PC-9 (cell line): ENCODE measurements at regions of chr1 and their contacts with region 1.

Region 1: DNA sequence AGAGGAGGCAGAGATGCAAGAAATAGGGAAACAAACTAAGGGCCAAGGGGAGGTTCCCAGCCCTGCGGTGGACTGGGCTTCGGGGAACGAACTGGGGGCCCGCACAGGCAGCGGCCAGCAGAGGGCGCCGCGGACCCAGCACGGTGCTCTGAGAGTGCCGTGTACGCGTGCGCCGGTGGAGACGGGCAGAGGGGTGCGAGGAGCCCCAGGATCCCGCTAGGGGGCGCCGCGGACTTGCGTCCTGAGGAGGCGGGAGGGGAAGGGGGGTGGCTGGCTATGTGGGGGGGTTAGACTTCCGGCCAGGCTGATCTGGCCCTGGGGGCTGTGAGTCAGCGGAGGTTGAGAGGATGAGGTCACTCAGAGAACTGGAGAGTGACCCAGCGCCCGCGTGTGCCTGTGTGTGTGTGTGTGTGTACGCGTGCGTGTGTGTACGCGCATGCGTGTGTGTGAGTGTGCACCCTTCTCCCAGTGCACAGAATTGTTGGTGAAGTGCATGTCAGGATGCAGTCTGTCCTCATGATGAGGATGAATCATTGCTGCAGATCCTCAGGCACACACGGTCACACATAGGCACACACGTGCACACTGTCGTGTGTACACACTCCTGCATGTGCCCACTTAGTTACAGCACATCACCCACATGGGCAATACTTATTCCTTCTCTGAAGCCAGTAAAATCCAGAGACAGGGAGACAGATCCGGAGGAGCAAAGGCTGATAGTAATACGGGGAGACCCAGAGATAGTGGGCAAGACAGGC is 17.0 kb downstream of the NES start:
- DNase-seq: peak; percentile 90 to 97
- H3K4me3 ChIP-seq: peak overlapping the region; percentile 73
- H3K27ac ChIP-seq: peak overlapping the region; percentile 86
- H3K4me1 ChIP-seq: peaks cover 25% of the 10 kb centered on the region
- H3K27me3 ChIP-seq: no peaks in the 10 kb centered on the region
- CTCF ChIP-seq: peak; percentile 98

Region 2: DNA sequence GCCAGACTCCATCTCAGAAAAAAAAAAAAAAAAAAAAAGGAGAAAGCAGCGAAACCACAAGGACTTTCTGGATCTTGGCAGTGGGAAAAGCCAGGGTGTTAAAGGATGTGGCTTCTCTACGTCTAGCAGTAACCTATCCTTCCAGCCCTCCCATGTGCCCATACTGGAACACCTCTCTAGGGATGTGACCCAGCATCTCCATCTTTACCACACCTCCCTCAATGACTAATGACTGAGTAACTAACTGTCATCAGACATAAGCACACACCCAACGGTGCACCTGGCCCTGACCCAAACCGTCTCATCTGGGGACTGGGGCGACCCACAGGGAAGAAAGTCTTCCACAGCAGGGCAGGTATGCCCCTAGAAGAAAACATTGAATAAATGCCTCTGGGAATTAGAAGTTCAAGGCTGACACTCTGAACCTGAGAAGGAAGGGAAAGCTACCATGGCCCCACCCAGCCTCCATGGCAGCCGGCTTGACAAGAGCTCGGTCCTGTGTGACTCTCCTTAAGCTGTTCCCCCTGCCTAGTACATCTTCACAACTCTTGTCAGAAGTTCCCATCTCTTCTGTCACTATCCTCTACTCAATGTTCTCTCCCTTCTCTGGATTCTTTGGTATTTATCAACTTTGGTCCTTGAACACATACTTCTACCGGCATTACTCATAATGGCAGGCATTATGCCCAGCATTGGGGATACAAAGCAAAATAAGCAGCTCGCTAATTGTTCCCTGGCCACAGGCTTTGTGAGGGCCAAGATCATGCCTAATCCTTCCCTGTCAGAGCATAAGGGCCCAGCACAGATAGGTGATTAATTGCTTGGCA is 397.5 kb before region 1 on chr1:
- CTCF ChIA-PET with region 1: interaction called, 13 read pairs
- POLR2A ChIA-PET with region 1: no interaction called
- intact Hi-C with region 1: no loop called
- DNase-seq: peak; percentile 45 to 46
- H3K4me3 ChIP-seq: no peak overlapping the region
- H3K27ac ChIP-seq: no peak overlapping the region
- H3K4me1 ChIP-seq: no peaks in the 10 kb centered on the region
- H3K27me3 ChIP-seq: no peaks in the 10 kb centered on the region
- CTCF ChIP-seq: no peak

Region 3: GRCh38 chr1:156500797-156501499 is 159.2 kb before region 1 on chr1:
- CTCF ChIA-PET with region 1: no interaction called
- POLR2A ChIA-PET with region 1: no interaction called
- intact Hi-C with region 1: no loop called
- DNase-seq: peak; percentile 87 to 93
- H3K4me3 ChIP-seq: peak overlapping the region; percentile 100
- H3K27ac ChIP-seq: peak overlapping the region; percentile 97
- H3K4me1 ChIP-seq: peaks cover 55% of the 10 kb centered on the region
- H3K27me3 ChIP-seq: no peaks in the 10 kb centered on the region
- CTCF ChIP-seq: peak; percentile 74

Region 4: DNA sequence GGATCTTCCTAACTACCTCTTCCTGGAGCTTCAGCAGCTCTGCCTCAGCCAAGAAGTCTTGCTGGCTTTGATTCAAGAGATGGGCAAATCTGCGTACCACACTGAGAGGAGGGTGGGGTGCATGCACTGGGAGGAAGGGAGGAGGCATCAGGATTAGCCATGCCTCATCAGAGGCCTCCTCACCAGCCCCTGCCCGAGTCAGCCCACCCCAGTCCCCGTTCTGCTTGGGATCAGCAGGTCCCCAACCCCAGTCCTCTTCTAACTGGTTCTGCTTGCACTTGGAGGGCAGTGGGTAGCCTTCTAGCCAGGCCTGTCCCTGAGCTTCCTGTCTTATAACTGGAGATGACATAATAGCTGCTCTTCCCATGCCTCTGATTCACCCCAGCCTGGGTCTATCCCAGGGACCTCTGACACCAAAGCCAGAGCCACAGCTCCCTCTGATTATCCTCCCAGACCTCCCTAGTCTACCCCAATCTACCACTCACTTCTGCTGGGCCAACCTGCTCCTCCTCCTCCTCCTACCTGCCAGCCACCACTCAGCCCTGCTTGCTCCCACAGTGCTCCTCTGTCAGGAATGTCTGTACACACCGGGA is 119.3 kb before region 1 on chr1:
- CTCF ChIA-PET with region 1: no interaction called
- POLR2A ChIA-PET with region 1: no interaction called
- intact Hi-C with region 1: no loop called
- DNase-seq: no peak
- H3K4me3 ChIP-seq: no peak overlapping the region
- H3K27ac ChIP-seq: no peak overlapping the region
- H3K4me1 ChIP-seq: peaks cover 11% of the 10 kb centered on the region
- H3K27me3 ChIP-seq: no peaks in the 10 kb centered on the region
- CTCF ChIP-seq: no peak

Region 5: DNA sequence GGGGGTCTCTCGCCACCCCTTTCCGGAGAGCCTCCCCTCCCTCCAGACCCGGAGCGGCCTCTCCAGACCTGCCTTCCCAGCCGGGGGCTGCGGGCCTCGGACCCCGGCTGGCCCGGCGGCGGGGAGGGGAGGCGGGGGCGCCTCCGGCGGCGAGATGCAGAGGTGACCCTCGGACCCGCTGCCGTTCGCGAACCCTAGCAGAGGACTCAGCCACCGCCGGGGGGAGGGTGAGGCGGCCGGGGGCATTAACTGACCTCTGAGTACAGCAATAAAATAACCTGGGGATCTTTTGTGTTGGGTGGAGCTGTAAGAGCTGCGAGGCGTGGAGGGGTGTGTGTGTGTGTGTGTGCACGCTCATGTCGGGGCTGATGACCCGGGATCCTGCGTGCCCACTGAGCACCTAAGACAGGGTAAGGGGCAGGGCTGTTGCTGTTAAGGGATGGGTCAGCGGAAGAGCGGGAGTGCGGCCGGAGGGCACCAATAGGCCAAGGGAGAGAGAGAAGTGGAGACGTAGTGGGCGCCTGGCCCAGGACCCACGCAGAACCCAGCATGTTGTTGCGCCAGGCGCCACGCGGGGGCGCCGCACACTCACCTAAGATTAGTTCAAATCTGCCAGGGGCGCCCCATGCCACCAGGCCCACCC is 34.6 kb before region 1 on chr1:
- CTCF ChIA-PET with region 1: interaction called, 7 read pairs
- POLR2A ChIA-PET with region 1: interaction called, 3 read pairs
- intact Hi-C with region 1: loop called (anchors 1 kb)
- DNase-seq: peak in 1 of 2 experiments; percentile 32
- H3K4me3 ChIP-seq: no peak overlapping the region
- H3K27ac ChIP-seq: no peak overlapping the region
- H3K4me1 ChIP-seq: peaks cover 26% of the 10 kb centered on the region
- H3K27me3 ChIP-seq: peaks cover 13% of the 10 kb centered on the region; the same call in 1 of the 2 replicates
- CTCF ChIP-seq: peak; percentile 92

Region 6: GRCh38 chr1:156677616-156678596 is 17.7 kb after region 1 on chr1:
- CTCF ChIA-PET with region 1: interaction called, 15 read pairs
- POLR2A ChIA-PET with region 1: interaction called, 3 read pairs
- intact Hi-C with region 1: loop called (anchors 1 kb)
- DNase-seq: peak in 1 of 2 experiments; percentile 56
- H3K4me3 ChIP-seq: peak overlapping the region; percentile 39; the same call in 1 of the 2 replicates
- H3K27ac ChIP-seq: no peak overlapping the region
- H3K4me1 ChIP-seq: peaks cover 9% of the 10 kb centered on the region
- H3K27me3 ChIP-seq: peaks cover 24% of the 10 kb centered on the region
- CTCF ChIP-seq: peak; percentile 91

Region 7: DNA sequence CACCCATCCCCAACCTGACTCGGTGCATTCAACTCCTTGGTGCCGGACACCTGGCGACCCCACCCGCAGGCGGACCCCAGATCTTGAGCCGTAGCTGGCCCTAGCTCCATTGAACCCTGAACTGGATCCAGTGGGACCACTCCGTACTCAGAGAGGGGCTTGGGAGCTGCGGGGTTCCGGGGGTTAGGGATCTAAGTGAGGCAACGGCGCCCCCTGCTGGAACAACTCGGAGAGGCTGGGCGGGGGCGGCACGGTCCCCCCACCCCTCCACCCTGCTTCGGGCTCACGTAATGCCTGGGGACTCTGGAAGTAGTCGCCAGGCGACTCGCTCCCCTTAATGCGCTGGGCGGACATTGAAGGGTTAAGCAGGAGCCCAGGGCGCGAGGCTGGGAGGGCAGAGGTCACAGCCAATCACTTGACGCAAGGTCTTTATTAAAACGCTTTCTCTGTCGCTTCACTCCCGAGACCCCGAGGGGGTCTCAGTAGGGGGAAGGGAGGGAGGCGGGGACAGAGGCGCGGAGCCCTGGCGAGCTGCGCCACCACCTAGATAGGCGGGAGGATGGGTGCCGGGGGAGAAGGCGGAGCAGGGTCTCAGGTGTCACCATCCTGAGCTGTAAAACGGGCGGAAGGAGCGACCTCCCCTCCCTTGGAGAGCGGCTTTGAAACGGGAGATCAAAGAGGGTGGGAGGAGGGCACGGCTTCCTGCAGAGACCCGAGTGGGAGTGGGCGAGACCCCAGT is 45.9 kb after region 1 on chr1:
- CTCF ChIA-PET with region 1: interaction called, 16 read pairs
- POLR2A ChIA-PET with region 1: interaction called, 13 read pairs
- intact Hi-C with region 1: loop called (anchors 1 kb)
- DNase-seq: peak in 1 of 2 experiments; percentile 86
- H3K4me3 ChIP-seq: peak overlapping the region; percentile 79
- H3K27ac ChIP-seq: 0 out of 2 replicates have a peak overlapping the region, but pooled peaks have one; percentile 55
- H3K4me1 ChIP-seq: peaks cover 47% of the 10 kb centered on the region
- H3K27me3 ChIP-seq: no peaks in the 10 kb centered on the region
- CTCF ChIP-seq: peak; percentile 98

Region 8: DNA sequence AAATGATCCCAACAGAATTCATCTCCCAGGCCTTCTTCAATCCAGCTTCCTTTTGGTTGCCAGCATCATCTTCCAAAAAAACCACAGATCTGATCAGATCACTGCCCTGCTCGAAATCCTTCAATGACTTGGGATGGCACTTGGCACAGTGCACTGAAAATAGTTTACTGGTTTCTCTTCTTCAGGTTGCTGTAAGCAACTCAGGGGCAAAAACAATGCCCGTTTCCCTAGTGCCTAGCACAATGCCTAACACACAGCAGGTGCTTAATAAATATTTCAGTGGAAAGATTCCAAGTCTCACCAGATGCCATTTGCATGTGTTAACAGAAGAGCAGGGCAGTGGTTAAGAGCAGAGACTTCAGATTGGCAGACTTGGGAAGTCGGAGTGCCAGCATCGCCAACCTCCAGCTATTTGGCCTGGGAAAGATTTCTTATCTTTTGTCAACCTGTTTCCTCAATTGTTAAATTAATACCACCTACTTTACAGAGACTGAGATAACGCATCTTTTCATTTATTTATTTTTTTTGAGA is 57.2 kb after region 1 on chr1:
- CTCF ChIA-PET with region 1: no interaction called
- POLR2A ChIA-PET with region 1: no interaction called
- intact Hi-C with region 1: no loop called
- DNase-seq: no peak
- H3K4me3 ChIP-seq: no peak overlapping the region
- H3K27ac ChIP-seq: no peak overlapping the region
- H3K4me1 ChIP-seq: peaks cover 16% of the 10 kb centered on the region
- H3K27me3 ChIP-seq: no peaks in the 10 kb centered on the region
- CTCF ChIP-seq: no peak

Region 9: DNA sequence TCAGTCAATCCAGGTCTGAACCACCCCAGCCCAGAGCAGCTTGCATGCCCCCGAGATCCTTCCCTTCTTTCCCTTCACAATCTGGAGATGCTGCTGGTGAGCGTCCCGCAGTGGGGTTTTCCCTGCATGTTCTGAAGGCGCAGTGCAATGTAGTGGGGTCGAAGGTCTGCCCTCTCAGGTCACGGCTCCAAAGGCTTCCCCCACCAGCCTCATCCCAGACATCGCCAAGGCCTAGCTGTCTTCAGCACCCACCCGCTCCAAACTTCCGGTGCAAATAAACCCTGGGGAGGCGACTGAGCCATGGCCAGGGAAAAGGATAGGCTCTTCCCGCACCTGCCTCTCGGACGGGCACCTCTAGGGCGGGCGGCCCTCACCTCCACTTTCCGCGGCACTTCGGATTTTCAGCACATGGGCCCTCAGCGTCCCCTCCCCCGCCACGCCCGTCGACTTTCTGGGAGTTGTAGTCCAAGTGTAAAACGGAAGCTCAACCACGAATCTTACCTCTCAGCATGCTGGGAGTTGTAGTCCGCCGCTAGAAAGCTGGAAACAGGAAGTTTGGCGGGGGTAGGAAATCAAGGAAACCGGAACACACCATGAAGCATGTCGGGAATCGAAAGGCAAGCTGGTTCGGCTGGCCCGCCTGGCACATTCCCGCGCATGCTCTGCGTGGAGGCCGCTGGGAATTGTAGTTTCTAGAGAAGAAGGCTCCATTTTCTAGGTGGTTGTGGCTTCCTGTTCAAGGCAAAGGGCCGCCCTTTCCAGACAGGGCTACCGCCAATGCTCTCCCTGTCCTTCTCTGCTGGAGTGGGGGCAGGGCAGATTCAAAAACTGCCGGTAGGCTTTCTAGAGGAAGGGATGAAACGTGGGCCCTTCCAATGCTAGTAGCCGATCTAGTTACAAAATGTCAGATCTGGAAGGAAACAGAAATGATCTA is 80.8 kb after region 1 on chr1 and contains the start of gene MRPL24:
- CTCF ChIA-PET with region 1: no interaction called
- POLR2A ChIA-PET with region 1: interaction called, 33 read pairs
- intact Hi-C with region 1: no loop called
- DNase-seq: peak; percentile 97 to 99
- H3K4me3 ChIP-seq: peak within 1 kb of the TSS; percentile 79
- H3K27ac ChIP-seq: peak within 1 kb of the TSS; percentile 60
- H3K4me1 ChIP-seq: peaks cover 17% of the 10 kb centered on the region
- H3K27me3 ChIP-seq: no peaks in the 10 kb centered on the region
- CTCF ChIP-seq: no peak
- total RNA-seq, gene MRPL24: 74.1 and 85.3 TPM in 2 replicates

Region 10: DNA sequence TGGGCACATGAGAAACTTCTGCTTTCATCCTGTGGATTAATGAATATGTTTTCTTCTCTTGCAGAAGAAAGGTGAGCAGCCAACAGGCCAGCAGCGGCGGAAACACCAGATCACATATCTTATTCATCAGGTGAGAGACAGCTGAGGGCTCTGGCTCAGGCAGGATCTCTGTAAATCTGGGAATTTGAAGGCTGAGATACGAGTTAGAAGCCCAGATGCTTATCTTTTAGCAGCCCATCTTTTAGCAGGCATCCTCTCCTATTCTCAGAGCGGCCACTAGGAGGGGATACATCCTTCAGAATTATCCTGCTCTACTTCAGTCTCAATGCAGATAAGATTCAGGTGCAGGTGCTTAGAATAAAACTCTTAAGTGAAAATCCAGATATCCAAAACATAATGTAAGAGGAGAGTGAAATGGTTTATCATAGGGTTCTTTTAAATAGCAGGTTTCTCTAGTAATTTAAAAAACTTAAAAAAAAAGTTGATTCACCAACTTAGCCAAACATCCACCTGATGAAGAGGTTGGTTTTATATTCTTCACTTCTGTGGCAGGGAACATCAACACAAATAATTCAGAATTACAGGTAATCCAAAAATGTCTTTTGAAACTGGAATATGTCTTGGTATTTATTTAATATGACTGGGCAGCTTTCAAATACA is 137.2 kb after region 1 on chr1:
- CTCF ChIA-PET with region 1: interaction called, 10 read pairs
- POLR2A ChIA-PET with region 1: no interaction called
- intact Hi-C with region 1: no loop called
- DNase-seq: peak; percentile 41 to 54
- H3K4me3 ChIP-seq: no peak overlapping the region
- H3K27ac ChIP-seq: no peak overlapping the region
- H3K4me1 ChIP-seq: no peaks in the 10 kb centered on the region
- H3K27me3 ChIP-seq: no peaks in the 10 kb centered on the region
- CTCF ChIP-seq: peak; percentile 90

Region 11: DNA sequence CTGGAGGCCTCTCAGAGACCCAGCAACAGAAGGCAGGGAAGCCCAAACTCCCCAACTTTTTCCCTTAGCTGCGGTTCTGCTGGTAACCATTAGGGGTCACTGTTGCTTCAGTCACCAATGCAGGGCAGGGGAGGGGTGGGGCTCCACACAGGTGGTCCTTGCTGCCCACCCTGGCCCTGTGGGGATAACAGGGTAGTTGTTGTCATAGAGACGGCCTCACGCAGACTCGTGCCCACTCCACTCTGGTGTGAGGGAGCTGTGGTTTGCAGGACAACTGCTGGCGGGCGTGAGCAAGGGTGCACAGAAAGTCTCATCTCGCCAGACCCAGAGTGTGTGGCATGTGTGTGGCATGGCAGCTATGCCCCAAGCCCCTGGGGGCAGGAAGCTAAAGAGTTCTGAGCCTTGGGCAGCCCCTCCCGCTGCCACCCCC is 178.8 kb after region 1 on chr1:
- CTCF ChIA-PET with region 1: no interaction called
- POLR2A ChIA-PET with region 1: no interaction called
- intact Hi-C with region 1: no loop called
- DNase-seq: peak; percentile 27 to 42
- H3K4me3 ChIP-seq: no peak overlapping the region
- H3K27ac ChIP-seq: no peak overlapping the region
- H3K4me1 ChIP-seq: no peaks in the 10 kb centered on the region
- H3K27me3 ChIP-seq: peaks cover 30% of the 10 kb centered on the region; the same call in 1 of the 2 replicates
- CTCF ChIP-seq: peak; percentile 96